Calu3 (cell line): ENCODE measurements at regions of chr12 and their contacts with region 1.

Region 1: GRCh38 chr12:121277374-121277759 is 19.1 kb downstream of the CAMKK2 start:
- DNase-seq: no peak
- H3K4me3 Mint-ChIP-seq: no peak overlapping the region
- H3K27ac Mint-ChIP-seq: peak overlapping the region; percentile 68
- H3K4me1 Mint-ChIP-seq: peaks cover 16% of the 10 kb centered on the region
- H3K27me3 Mint-ChIP-seq: no peaks in the 10 kb centered on the region
- CTCF ChIP-seq: no peak

Region 2: GRCh38 chr12:121289962-121290361 is 12.6 kb after region 1 on chr12:
- CTCF ChIA-PET with region 1: interaction called, 10 read pairs
- intact Hi-C with region 1: no loop called
- DNase-seq: no peak
- H3K4me3 Mint-ChIP-seq: no peak overlapping the region
- H3K27ac Mint-ChIP-seq: no peak overlapping the region
- H3K4me1 Mint-ChIP-seq: no peaks in the 10 kb centered on the region
- H3K27me3 Mint-ChIP-seq: no peaks in the 10 kb centered on the region
- CTCF ChIP-seq: no peak